ENCODE measurements at regions of chr6 and their contacts with region 1.

Region 1: GRCh38 chr6:41545703-41546474 is at the start of gene FOXP4:
- DNase-seq: peak; percentile 85
- ATAC-seq: peak; percentile 84
- H3K4me3 ChIP-seq: peak within 1 kb of the TSS; percentile 82 to 93
- H3K27ac ChIP-seq: peak within 1 kb of the TSS; percentile 77
- H3K4me1 ChIP-seq: peaks cover 0 to 17% of the 10 kb centered on the region in 2 experiments; a peak in 2 of 4 replicates
- H3K27me3 ChIP-seq: no peaks in the 10 kb centered on the region
- CTCF ChIP-seq: no peak
- POLR2A ChIP-seq: no peak
- RAD21 ChIP-seq: no peak
- total RNA-seq, gene FOXP4: 32.3 TPM

Region 2: GRCh38 chr6:41424370-41425058 is 121.4 kb before region 1 on chr6:
- CTCF ChIA-PET with region 1: no interaction called
- POLR2A ChIA-PET with region 1: no interaction called
- RAD21 ChIA-PET with region 1: no interaction called
- intact Hi-C with region 1: loop called (anchors 1 kb)
- DNase-seq: peak; percentile 66
- ATAC-seq: peak; percentile 62
- H3K4me3 ChIP-seq: no peak overlapping the region
- H3K27ac ChIP-seq: no peak overlapping the region
- H3K4me1 ChIP-seq: peaks cover 18 to 32% of the 10 kb centered on the region in 2 experiments
- H3K27me3 ChIP-seq: no peaks in the 10 kb centered on the region; the same call in 1 of the 2 replicates
- CTCF ChIP-seq: peak; percentile 89 to 94 (median 91)
- POLR2A ChIP-seq: no peak
- RAD21 ChIP-seq: peak; percentile 84

Region 3: GRCh38 chr6:41850861-41851260 is 305.0 kb after region 1 on chr6:
- CTCF ChIA-PET with region 1: no interaction called
- POLR2A ChIA-PET with region 1: no interaction called
- RAD21 ChIA-PET with region 1: no interaction called
- intact Hi-C with region 1: no loop called
- DNase-seq: no peak
- ATAC-seq: no peak
- H3K4me3 ChIP-seq: no peak overlapping the region
- H3K27ac ChIP-seq: no peak overlapping the region
- H3K4me1 ChIP-seq: peaks cover 5 to 9% of the 10 kb centered on the region in 2 experiments
- H3K27me3 ChIP-seq: no peaks in the 10 kb centered on the region
- CTCF ChIP-seq: no peak
- POLR2A ChIP-seq: no peak
- RAD21 ChIP-seq: no peak

Measured in HCT116 (cell line).